Psoas muscle (tissue), 8 donors: ENCODE measurements at regions of chr7 and their contacts with region 1.

Region 1: GRCh38 chr7:34091323-34091917 is 186.1 kb downstream of the BMPER start:
- DNase-seq: peak in 1 of 2 donors; percentile 20
- ATAC-seq: peak in 2 of 4 donors; percentile 43 to 62
- H3K4me3 ChIP-seq: no peak overlapping the region
- H3K27ac ChIP-seq: no peak overlapping the region
- H3K4me1 ChIP-seq: peaks cover 13% of the 10 kb centered on the region
- H3K27me3 ChIP-seq: no peaks in the 10 kb centered on the region
- CTCF ChIP-seq: peak; percentile 67

Region 2: GRCh38 chr7:33986941-33987588 is 104.4 kb before region 1 on chr7:
- intact Hi-C with region 1: loop called in 1 of 2 experiments (anchors 10 kb)
- DNase-seq: no peak
- ATAC-seq: peak; percentile 73 to 85 (median 74)
- H3K4me3 ChIP-seq: no peak overlapping the region
- H3K27ac ChIP-seq: no peak overlapping the region
- H3K4me1 ChIP-seq: no peaks in the 10 kb centered on the region
- H3K27me3 ChIP-seq: no peaks in the 10 kb centered on the region
- CTCF ChIP-seq: no peak

Region 3: GRCh38 chr7:34133983-34134782 is 42.8 kb after region 1 on chr7:
- intact Hi-C with region 1: loop called in 1 of 2 experiments (anchors 5 kb)
- DNase-seq: peak; percentile 66 to 82
- ATAC-seq: peak; percentile 79 to 89 (median 84)
- H3K4me3 ChIP-seq: no peak overlapping the region
- H3K27ac ChIP-seq: no peak overlapping the region
- H3K4me1 ChIP-seq: peaks cover 15% of the 10 kb centered on the region
- H3K27me3 ChIP-seq: no peaks in the 10 kb centered on the region
- CTCF ChIP-seq: peak; percentile 78

Region 4: GRCh38 chr7:34165929-34166550 is 74.6 kb after region 1 on chr7:
- intact Hi-C with region 1: loop called (anchors 2 kb)
- DNase-seq: no peak
- ATAC-seq: peak; percentile 85 to 91 (median 88)
- H3K4me3 ChIP-seq: no peak overlapping the region
- H3K27ac ChIP-seq: peak overlapping the region; percentile 74
- H3K4me1 ChIP-seq: peaks cover 17% of the 10 kb centered on the region
- H3K27me3 ChIP-seq: no peaks in the 10 kb centered on the region
- CTCF ChIP-seq: peak; percentile 68

Region 5: DNA sequence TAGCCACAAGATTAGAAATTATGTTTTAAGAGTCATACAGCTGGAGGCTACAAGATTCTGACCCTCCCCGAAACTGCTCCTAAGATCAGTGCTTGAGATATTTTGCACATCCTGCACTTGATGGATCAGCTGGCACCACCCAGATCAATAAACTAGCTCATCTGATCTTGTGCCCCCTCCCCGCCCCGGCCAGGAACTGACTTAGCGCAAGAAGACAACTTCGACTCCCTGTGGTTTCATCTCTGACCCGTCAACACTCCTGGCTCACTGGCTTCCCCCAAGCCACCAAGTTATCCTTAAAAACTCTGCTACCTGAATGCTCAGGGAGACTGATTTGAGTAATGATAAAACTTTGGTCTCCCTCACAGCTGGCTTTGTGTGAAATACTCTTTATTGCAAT is 493.1 kb after region 1 on chr7:
- intact Hi-C with region 1: loop called in 1 of 2 experiments (anchors 10 kb)
- DNase-seq: no peak
- ATAC-seq: no peak
- H3K4me3 ChIP-seq: no peak overlapping the region
- H3K27ac ChIP-seq: no peak overlapping the region
- H3K4me1 ChIP-seq: no peaks in the 10 kb centered on the region
- H3K27me3 ChIP-seq: no peaks in the 10 kb centered on the region
- CTCF ChIP-seq: no peak